SK-N-SH (cell line): ENCODE measurements at regions of chr18 and their contacts with region 1.

Region 1: GRCh38 chr18:24672165-24672941 is 211.9 kb downstream of the HRH4 start:
- DNase-seq: peak; percentile 63
- H3K4me3 ChIP-seq: no peak overlapping the region
- H3K27ac ChIP-seq: peak overlapping the region in 1 of 2 experiments; percentile 75; a peak in 2 of 4 replicates
- H3K4me1 ChIP-seq: peaks cover 0 to 26% of the 10 kb centered on the region in 2 experiments; a peak in 2 of 4 replicates
- H3K27me3 ChIP-seq: no peaks in the 10 kb centered on the region
- CTCF ChIP-seq: no peak
- EP300 ChIP-seq: peak in 1 of 2 experiments; percentile 82; a peak in 2 of 4 replicates
- RAD21 ChIP-seq: peak; percentile 77

Region 2: DNA sequence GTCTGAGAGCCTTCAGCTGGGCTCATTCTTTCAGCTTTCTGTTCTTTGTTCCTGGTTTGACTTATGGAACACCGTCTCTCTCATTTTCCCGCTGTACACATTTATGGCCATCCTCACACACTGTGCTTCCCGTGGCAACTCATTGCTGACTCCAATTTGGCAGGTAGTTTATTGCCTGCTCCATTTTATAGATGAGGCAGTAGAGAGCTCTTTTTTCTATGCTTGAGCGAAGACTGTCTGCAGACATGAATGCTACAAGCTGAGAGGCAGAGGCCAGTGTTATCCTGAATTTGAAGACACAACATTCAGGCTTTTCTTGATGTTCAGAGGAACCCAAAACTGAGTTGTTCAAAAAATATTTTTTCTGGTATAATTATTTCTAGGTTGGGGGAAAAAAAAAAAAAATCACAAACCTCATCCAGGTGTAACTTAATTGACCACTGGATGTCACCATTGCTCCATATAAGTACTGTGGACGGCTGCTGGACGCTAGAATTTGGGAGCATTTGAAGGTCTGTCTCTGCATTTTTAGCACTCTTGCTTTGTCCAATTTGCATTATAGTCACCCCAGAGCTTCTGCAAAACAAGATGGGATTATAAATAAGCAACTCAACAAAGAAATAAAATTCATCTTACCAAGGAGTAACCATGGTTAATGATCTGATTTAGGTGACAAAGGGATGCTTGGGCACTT is 128.4 kb before region 1 on chr18:
- CTCF ChIA-PET with region 1: interaction called, 31 read pairs
- POLR2A ChIA-PET with region 1: no interaction called
- DNase-seq: peak; percentile 39
- H3K4me3 ChIP-seq: no peak overlapping the region; a peak in 1 of 4 replicates
- H3K27ac ChIP-seq: no peak overlapping the region
- H3K4me1 ChIP-seq: peaks cover 0 to 5% of the 10 kb centered on the region in 2 experiments; a peak in 2 of 4 replicates
- H3K27me3 ChIP-seq: no peaks in the 10 kb centered on the region; the same call in 1 of the 2 replicates
- CTCF ChIP-seq: peak; percentile 52
- EP300 ChIP-seq: no peak
- RAD21 ChIP-seq: peak; percentile 82

Region 3: DNA sequence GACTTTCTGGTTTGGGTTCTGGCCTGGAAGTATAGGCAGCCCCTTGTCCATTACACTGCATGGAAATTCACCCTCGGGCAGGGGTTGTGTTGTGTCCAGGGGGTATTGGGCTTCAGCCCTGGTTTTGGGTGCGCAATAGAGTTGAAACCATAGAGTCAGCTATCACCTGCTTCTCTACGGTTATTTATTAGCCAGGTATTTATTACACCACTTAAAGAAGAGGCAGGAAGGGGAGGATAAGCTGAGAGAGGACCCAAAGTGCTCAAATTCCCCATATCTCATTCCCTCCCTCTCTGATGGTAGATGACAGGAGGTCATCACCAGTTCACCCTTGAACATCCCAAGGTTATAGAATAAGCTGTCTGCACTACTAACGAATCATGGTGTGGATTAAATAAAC is 78.5 kb before region 1 on chr18:
- CTCF ChIA-PET with region 1: interaction called, 77 read pairs
- POLR2A ChIA-PET with region 1: no interaction called
- DNase-seq: no peak
- H3K4me3 ChIP-seq: no peak overlapping the region
- H3K27ac ChIP-seq: no peak overlapping the region
- H3K4me1 ChIP-seq: no peaks in the 10 kb centered on the region
- H3K27me3 ChIP-seq: no peaks in the 10 kb centered on the region
- CTCF ChIP-seq: no peak
- EP300 ChIP-seq: no peak
- RAD21 ChIP-seq: no peak

Region 4: GRCh38 chr18:24600076-24600654 is 72.2 kb before region 1 on chr18:
- CTCF ChIA-PET with region 1: interaction called, 77 read pairs
- POLR2A ChIA-PET with region 1: interaction called, 5 read pairs
- DNase-seq: peak; percentile 56
- H3K4me3 ChIP-seq: no peak overlapping the region
- H3K27ac ChIP-seq: no peak overlapping the region
- H3K4me1 ChIP-seq: no peaks in the 10 kb centered on the region
- H3K27me3 ChIP-seq: no peaks in the 10 kb centered on the region
- CTCF ChIP-seq: peak; percentile 75
- EP300 ChIP-seq: no peak
- RAD21 ChIP-seq: peak; percentile 84

Region 5: GRCh38 chr18:24659827-24660720 is 12.3 kb before region 1 on chr18:
- CTCF ChIA-PET with region 1: interaction called, 12 read pairs
- POLR2A ChIA-PET with region 1: interaction called, 4 read pairs
- DNase-seq: no peak
- H3K4me3 ChIP-seq: no peak overlapping the region
- H3K27ac ChIP-seq: no peak overlapping the region
- H3K4me1 ChIP-seq: peaks cover 0 to 11% of the 10 kb centered on the region in 2 experiments; a peak in 1 of 4 replicates
- H3K27me3 ChIP-seq: peaks cover 5% of the 10 kb centered on the region; the same call in 1 of the 2 replicates
- CTCF ChIP-seq: no peak
- EP300 ChIP-seq: no peak
- RAD21 ChIP-seq: no peak

Region 6: DNA sequence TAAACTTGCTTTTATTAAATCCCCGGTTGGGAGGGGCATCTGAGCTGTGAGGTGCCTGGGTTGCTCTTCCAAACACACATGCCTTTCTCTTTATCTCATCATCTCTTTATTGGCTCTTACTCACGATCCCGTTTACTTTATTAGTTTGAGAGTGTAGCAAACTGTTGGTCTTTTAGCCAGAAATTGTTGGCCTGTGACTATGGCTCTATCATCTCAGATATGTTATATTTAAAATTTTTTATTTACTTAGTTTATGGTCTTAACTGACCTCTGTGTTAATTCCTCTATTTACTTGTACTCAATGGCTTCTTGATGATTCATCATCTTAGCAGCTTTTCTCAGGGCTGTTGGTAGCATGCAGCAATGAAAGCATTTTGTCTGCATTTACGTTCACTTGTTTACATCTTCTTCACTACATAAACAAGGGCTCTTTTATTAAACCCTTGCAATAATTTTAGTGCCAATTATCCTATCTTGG is 196.4 kb after region 1 on chr18:
- CTCF ChIA-PET with region 1: no interaction called
- POLR2A ChIA-PET with region 1: no interaction called
- DNase-seq: no peak
- H3K4me3 ChIP-seq: no peak overlapping the region
- H3K27ac ChIP-seq: no peak overlapping the region
- H3K4me1 ChIP-seq: no peaks in the 10 kb centered on the region
- H3K27me3 ChIP-seq: no peaks in the 10 kb centered on the region
- CTCF ChIP-seq: no peak
- EP300 ChIP-seq: no peak
- RAD21 ChIP-seq: no peak